HepG2 (cell line): ENCODE measurements at regions of chr7 and their contacts with region 1.

Region 1: DNA sequence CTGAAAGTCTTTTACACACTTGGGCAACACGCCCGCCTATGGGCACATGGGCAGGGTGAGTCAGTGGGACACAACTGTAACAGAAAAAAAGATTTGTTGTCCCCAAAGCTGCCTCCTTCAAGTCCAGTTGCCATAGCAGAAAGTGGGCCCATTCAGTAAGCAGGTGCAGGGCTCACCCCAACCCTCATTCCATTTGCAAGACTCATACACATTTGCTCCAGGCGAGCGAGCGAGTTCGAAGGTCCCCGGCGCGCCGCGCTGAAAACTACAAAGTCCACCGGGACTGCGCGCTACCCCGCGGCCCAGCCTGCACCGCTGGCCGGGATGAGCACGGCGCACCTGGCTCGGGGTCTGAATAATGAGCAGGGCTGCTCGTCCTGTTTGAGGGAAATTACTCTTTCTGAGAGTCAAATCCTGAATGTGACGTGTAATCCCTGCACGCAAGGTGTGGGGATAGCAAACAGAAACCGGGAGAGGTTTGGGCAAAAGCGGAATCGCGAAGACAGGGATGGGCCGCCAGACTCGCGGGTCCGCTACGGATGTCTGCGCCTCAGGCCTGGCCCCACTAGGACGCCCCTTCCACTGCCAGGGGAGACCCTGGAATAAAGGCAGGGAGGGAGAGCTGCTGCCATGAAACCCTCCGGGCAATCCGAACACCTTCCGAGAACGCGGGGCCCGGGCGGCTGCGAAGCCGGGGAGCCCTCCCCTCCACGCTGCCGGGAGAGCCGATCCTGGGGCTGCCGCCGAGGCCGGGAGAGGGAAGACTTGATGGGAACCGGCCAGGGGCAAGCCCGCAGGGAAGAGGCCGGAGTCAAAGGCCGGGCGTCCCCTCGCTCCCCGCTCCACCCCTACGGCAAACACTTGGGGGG is 982 bp downstream of the COBL start:
- DNase-seq: peak; percentile 73
- ATAC-seq: peak; percentile 83
- H3K4me3 ChIP-seq: peak overlapping the region; percentile 68 to 83 (median 69)
- H3K27ac ChIP-seq: peak overlapping the region; percentile 79
- H3K4me1 ChIP-seq: peaks cover 64% of the 10 kb centered on the region
- H3K27me3 ChIP-seq: no peaks in the 10 kb centered on the region; a peak in 1 of 5 replicates
- CTCF ChIP-seq: no peak
- EP300 ChIP-seq: peak in 1 of 2 experiments; percentile 36; a peak in 1 of 4 replicates
- POLR2A ChIP-seq: peak; percentile 51 to 84; a peak in 3 of 4 replicates
- RAD21 ChIP-seq: peak; percentile 42; the same call in 1 of the 2 replicates

Region 2: DNA sequence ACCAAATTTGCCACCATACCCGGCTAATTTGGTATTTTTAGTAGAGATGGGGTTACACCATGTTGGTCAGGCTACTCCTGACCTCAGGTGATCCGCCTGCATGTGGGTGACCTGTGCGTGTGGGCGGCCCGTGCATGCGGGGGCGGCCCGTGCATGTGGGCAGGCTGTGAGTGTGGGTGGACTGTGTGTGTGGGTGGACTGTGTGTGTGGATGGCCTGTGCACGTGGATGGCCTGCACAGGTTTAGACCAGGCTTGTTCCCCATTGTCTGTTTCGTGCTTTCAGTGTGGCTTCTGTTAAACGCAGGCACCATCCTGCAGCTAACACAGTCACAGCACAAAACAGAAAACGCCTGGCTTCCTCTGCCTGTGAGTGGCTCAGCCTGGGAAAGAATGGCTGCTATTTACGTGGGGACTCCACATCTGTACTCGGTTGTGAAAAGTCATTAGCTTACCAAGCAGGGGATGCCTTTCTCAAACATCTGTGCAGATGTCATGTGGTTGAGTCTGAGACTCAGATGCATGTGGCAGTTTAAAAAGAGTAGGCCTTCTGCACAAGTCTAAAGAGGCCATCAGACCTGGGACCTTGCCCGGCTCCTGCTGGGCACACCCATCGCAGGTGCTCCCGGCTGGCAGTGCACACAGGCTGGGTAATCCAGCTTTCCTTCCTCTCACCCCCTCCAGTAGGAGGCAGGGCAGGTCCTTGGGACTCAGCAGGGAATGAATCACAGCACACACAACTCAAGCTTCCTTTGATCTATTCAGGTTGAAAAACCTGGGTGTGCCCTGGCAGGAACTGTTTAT is 90.6 kb before region 1 on chr7:
- CTCF ChIA-PET with region 1: no interaction called
- POLR2A ChIA-PET with region 1: no interaction called
- in situ Hi-C with region 1: no loop called
- intact Hi-C with region 1: loop called (anchors 2 kb)
- DNase-seq: peak; percentile 31
- ATAC-seq: peak; percentile 89
- H3K4me3 ChIP-seq: no peak overlapping the region
- H3K27ac ChIP-seq: no peak overlapping the region
- H3K4me1 ChIP-seq: no peaks in the 10 kb centered on the region
- H3K27me3 ChIP-seq: no peaks in the 10 kb centered on the region
- CTCF ChIP-seq: peak; percentile 69
- EP300 ChIP-seq: no peak
- POLR2A ChIP-seq: no peak
- RAD21 ChIP-seq: no peak

Region 3: GRCh38 chr7:51237446-51238150 is 78.0 kb before region 1 on chr7:
- CTCF ChIA-PET with region 1: no interaction called
- POLR2A ChIA-PET with region 1: no interaction called
- in situ Hi-C with region 1: no loop called
- intact Hi-C with region 1: no loop called
- DNase-seq: no peak
- ATAC-seq: no peak
- H3K4me3 ChIP-seq: no peak overlapping the region
- H3K27ac ChIP-seq: no peak overlapping the region
- H3K4me1 ChIP-seq: peaks cover 8% of the 10 kb centered on the region
- H3K27me3 ChIP-seq: no peaks in the 10 kb centered on the region
- CTCF ChIP-seq: no peak
- EP300 ChIP-seq: no peak
- POLR2A ChIP-seq: no peak
- RAD21 ChIP-seq: no peak

Region 4: GRCh38 chr7:51278797-51279196 is 36.8 kb before region 1 on chr7:
- CTCF ChIA-PET with region 1: no interaction called
- POLR2A ChIA-PET with region 1: no interaction called
- in situ Hi-C with region 1: no loop called
- intact Hi-C with region 1: loop called (anchors 5 kb)
- DNase-seq: no peak
- ATAC-seq: no peak
- H3K4me3 ChIP-seq: no peak overlapping the region
- H3K27ac ChIP-seq: no peak overlapping the region
- H3K4me1 ChIP-seq: peaks cover 45% of the 10 kb centered on the region
- H3K27me3 ChIP-seq: no peaks in the 10 kb centered on the region
- CTCF ChIP-seq: no peak
- EP300 ChIP-seq: no peak
- POLR2A ChIP-seq: no peak
- RAD21 ChIP-seq: no peak

Region 5: GRCh38 chr7:51299391-51300133 is 16.1 kb before region 1 on chr7:
- CTCF ChIA-PET with region 1: no interaction called
- POLR2A ChIA-PET with region 1: no interaction called
- in situ Hi-C with region 1: no loop called
- intact Hi-C with region 1: no loop called
- DNase-seq: no peak
- ATAC-seq: peak; percentile 81
- H3K4me3 ChIP-seq: no peak overlapping the region
- H3K27ac ChIP-seq: no peak overlapping the region
- H3K4me1 ChIP-seq: peaks cover 9% of the 10 kb centered on the region
- H3K27me3 ChIP-seq: no peaks in the 10 kb centered on the region
- CTCF ChIP-seq: no peak
- EP300 ChIP-seq: no peak
- POLR2A ChIP-seq: no peak
- RAD21 ChIP-seq: no peak

Region 6: DNA sequence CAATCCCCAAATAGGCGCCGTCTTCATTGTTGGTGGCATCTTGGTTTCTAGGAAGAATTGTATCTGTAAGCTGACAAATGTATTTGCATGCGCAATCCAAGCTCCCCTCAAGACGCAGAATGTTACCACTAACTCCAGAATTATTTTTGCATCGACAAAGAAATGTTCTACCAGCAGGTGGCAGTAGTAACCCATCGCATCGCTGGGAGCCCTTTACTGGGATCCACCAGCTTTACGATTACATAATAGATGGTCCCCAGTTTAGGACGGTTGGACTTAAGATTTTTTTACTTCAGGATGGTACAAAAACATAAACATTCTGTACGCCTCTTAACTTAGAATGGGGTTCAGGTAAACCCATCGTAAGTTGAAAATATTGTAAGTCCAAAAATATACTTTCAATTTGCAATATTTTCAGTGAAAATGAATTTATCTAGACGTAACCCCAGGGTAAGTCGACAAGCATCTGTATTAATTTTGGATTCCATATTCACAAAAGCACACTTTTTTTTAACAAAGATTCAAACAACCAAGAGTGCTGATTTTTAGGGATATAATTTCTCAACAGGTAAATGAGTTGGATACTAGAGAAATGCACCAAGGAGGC is 115.0 kb after region 1 on chr7:
- CTCF ChIA-PET with region 1: no interaction called
- POLR2A ChIA-PET with region 1: no interaction called
- in situ Hi-C with region 1: no loop called
- intact Hi-C with region 1: no loop called
- DNase-seq: peak; percentile 43
- ATAC-seq: peak; percentile 63
- H3K4me3 ChIP-seq: no peak overlapping the region
- H3K27ac ChIP-seq: no peak overlapping the region
- H3K4me1 ChIP-seq: no peaks in the 10 kb centered on the region
- H3K27me3 ChIP-seq: peaks cover 0 to 3% of the 10 kb centered on the region in 2 experiments; a peak in 1 of 5 replicates
- CTCF ChIP-seq: peak; percentile 86
- EP300 ChIP-seq: no peak
- POLR2A ChIP-seq: no peak
- RAD21 ChIP-seq: peak; percentile 74; the same call in 1 of the 2 replicates